Endothelial cell of umbilical vein (primary cell): ENCODE measurements at regions of chr11 and their contacts with region 1.

Region 1: DNA sequence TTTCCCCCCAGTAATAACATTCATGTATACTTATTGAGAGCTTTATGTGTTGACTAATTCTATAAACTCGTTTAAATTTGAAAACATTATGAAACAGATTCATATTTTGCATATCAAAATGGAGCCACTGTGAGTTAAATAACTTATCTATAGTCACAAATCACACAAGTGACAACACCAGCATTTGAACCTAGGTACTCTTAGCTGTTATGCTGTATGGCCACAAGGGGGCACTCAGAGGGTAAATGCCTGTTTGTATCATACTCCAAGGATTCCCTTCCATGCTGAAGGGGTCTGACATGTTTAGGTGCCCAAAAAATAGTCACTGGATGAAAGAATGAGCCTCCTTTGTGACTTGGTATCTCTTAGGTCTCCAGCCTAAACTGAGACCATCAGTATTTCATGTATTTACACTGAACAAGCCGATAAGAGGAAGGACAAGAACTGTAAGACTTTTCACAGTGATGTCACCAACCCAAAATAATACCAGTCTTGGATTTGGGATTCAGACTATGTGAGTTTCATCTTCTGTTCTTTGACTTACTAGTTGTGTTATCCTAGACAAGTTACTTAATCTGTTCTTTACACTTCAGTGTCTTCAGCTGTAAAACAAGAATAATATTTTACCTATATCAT is 12.2 kb upstream of the OR52D1 start:
- DNase-seq: peak; percentile 56
- H3K4me3 ChIP-seq: no peak overlapping the region
- H3K27ac ChIP-seq: no peak overlapping the region
- H3K4me1 ChIP-seq: no peaks in the 10 kb centered on the region
- H3K27me3 ChIP-seq: peaks cover 1 to 3% of the 10 kb centered on the region in 2 experiments
- CTCF ChIP-seq: peak; percentile 67 to 71
- POLR2A ChIP-seq: no peak

Region 2: GRCh38 chr11:4983841-4984240 is 492.5 kb before region 1 on chr11:
- CTCF ChIA-PET with region 1: no interaction called
- POLR2A ChIA-PET with region 1: no interaction called
- dilution Hi-C with region 1: no loop called
- intact Hi-C with region 1: no loop called
- DNase-seq: no peak
- H3K4me3 ChIP-seq: no peak overlapping the region
- H3K27ac ChIP-seq: no peak overlapping the region
- H3K4me1 ChIP-seq: no peaks in the 10 kb centered on the region
- H3K27me3 ChIP-seq: no peaks in the 10 kb centered on the region
- CTCF ChIP-seq: no peak
- POLR2A ChIP-seq: no peak

Region 3: GRCh38 chr11:5712507-5712906 is 236.2 kb after region 1 on chr11:
- CTCF ChIA-PET with region 1: interaction called, 10 read pairs
- POLR2A ChIA-PET with region 1: no interaction called
- dilution Hi-C with region 1: no loop called
- intact Hi-C with region 1: loop called (anchors 1 kb)
- DNase-seq: peak; percentile 28
- H3K4me3 ChIP-seq: no peak overlapping the region
- H3K27ac ChIP-seq: no peak overlapping the region
- H3K4me1 ChIP-seq: no peaks in the 10 kb centered on the region
- H3K27me3 ChIP-seq: no peaks in the 10 kb centered on the region
- CTCF ChIP-seq: peak; percentile 23 to 27
- POLR2A ChIP-seq: no peak

Region 4: GRCh38 chr11:5891216-5891800 is 415.0 kb after region 1 on chr11:
- CTCF ChIA-PET with region 1: interaction called, 29 read pairs
- POLR2A ChIA-PET with region 1: no interaction called
- dilution Hi-C with region 1: no loop called
- intact Hi-C with region 1: loop called (anchors 1 kb)
- DNase-seq: peak; percentile 32
- H3K4me3 ChIP-seq: no peak overlapping the region
- H3K27ac ChIP-seq: no peak overlapping the region
- H3K4me1 ChIP-seq: no peaks in the 10 kb centered on the region
- H3K27me3 ChIP-seq: no peaks in the 10 kb centered on the region
- CTCF ChIP-seq: peak in 1 of 2 donors; percentile 13
- POLR2A ChIP-seq: no peak